ENCODE measurements at regions of chr14 and their contacts with region 1.

Region 1: GRCh38 chr14:50003213-50004031 is 110.5 kb downstream of the ARF6 start:
- DNase-seq: peak; percentile 35
- ATAC-seq: peak; percentile 48
- H3K4me3 ChIP-seq: peak overlapping the region; percentile 44
- H3K27ac ChIP-seq: peak overlapping the region; percentile 70
- H3K4me1 ChIP-seq: peaks cover 39% of the 10 kb centered on the region
- H3K27me3 ChIP-seq: no peaks in the 10 kb centered on the region
- CTCF ChIP-seq: peak; percentile 8; the same call in 1 of the 2 replicates
- POLR2A ChIP-seq: no peak
- RAD21 ChIP-seq: peak; percentile 19

Region 2: GRCh38 chr14:49653508-49653907 is 349.9 kb before region 1 on chr14:
- CTCF ChIA-PET with region 1: no interaction called
- POLR2A ChIA-PET with region 1: no interaction called
- dilution Hi-C with region 1: no loop called
- in situ Hi-C with region 1: no loop called
- intact Hi-C with region 1: no loop called
- DNase-seq: no peak
- ATAC-seq: no peak
- H3K4me3 ChIP-seq: no peak overlapping the region
- H3K27ac ChIP-seq: no peak overlapping the region
- H3K4me1 ChIP-seq: no peaks in the 10 kb centered on the region
- H3K27me3 ChIP-seq: no peaks in the 10 kb centered on the region
- CTCF ChIP-seq: no peak
- POLR2A ChIP-seq: no peak
- RAD21 ChIP-seq: no peak

Region 3: GRCh38 chr14:49828640-49829039 is 174.8 kb before region 1 on chr14:
- CTCF ChIA-PET with region 1: no interaction called
- POLR2A ChIA-PET with region 1: no interaction called
- dilution Hi-C with region 1: no loop called
- in situ Hi-C with region 1: no loop called
- intact Hi-C with region 1: no loop called
- DNase-seq: no peak
- ATAC-seq: no peak
- H3K4me3 ChIP-seq: no peak overlapping the region
- H3K27ac ChIP-seq: no peak overlapping the region
- H3K4me1 ChIP-seq: no peaks in the 10 kb centered on the region
- H3K27me3 ChIP-seq: no peaks in the 10 kb centered on the region
- CTCF ChIP-seq: no peak
- POLR2A ChIP-seq: no peak
- RAD21 ChIP-seq: no peak

Region 4: GRCh38 chr14:49852301-49853157 is 150.9 kb before region 1 on chr14 and contains the start of gene NEMF:
- CTCF ChIA-PET with region 1: no interaction called
- POLR2A ChIA-PET with region 1: interaction called, 4 read pairs
- dilution Hi-C with region 1: loop called (anchors 25 kb)
- in situ Hi-C with region 1: no loop called
- intact Hi-C with region 1: no loop called
- DNase-seq: peak; percentile 83
- ATAC-seq: peak; percentile 86
- H3K4me3 ChIP-seq: peak within 1 kb of the TSS; percentile 89
- H3K27ac ChIP-seq: peak within 1 kb of the TSS; percentile 97
- H3K4me1 ChIP-seq: no peaks in the 10 kb centered on the region
- H3K27me3 ChIP-seq: no peaks in the 10 kb centered on the region
- CTCF ChIP-seq: peak; percentile 75
- POLR2A ChIP-seq: peak; percentile 69; the same call in 1 of the 2 replicates
- RAD21 ChIP-seq: peak; percentile 32
- total RNA-seq, gene NEMF: 30.5 and 76.1 TPM in 2 replicates

Region 5: GRCh38 chr14:50038398-50039119 is 35.1 kb after region 1 on chr14:
- CTCF ChIA-PET with region 1: no interaction called
- POLR2A ChIA-PET with region 1: no interaction called
- dilution Hi-C with region 1: no loop called
- in situ Hi-C with region 1: no loop called
- intact Hi-C with region 1: loop called (anchors 2 kb)
- DNase-seq: peak; percentile 98
- ATAC-seq: peak; percentile 78
- H3K4me3 ChIP-seq: no peak overlapping the region
- H3K27ac ChIP-seq: peak overlapping the region; percentile 49
- H3K4me1 ChIP-seq: peaks cover 25% of the 10 kb centered on the region
- H3K27me3 ChIP-seq: no peaks in the 10 kb centered on the region
- CTCF ChIP-seq: peak; percentile 37
- POLR2A ChIP-seq: no peak
- RAD21 ChIP-seq: peak; percentile 50

Region 6: DNA sequence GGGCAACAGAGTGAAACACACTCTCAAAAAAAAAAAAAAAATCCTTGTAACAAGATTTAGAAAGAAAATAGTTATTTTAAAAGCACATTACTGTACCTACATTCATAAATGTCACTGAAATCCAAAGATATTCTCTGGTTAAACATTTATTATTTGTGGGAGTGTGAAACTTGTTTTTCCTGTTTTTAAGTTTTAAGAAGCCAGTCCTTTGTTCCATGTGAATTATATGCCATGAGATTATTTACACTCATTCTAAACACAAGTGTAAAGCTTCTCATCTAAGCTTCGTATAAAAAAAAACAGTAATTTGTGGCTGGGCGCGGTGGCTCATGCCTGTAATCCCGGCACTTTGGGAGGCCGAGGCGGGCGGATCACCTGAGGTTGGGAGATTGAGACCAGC is 98.0 kb after region 1 on chr14:
- CTCF ChIA-PET with region 1: no interaction called
- POLR2A ChIA-PET with region 1: interaction called, 5 read pairs
- dilution Hi-C with region 1: no loop called
- in situ Hi-C with region 1: no loop called
- intact Hi-C with region 1: loop called (anchors 5 kb)
- DNase-seq: no peak
- ATAC-seq: no peak
- H3K4me3 ChIP-seq: no peak overlapping the region
- H3K27ac ChIP-seq: no peak overlapping the region
- H3K4me1 ChIP-seq: 0 out of 2 replicates have a peak, but pooled peaks cover 2% of the 10 kb centered on the region
- H3K27me3 ChIP-seq: no peaks in the 10 kb centered on the region
- CTCF ChIP-seq: no peak
- POLR2A ChIP-seq: no peak
- RAD21 ChIP-seq: no peak